PC-9 (cell line): ENCODE measurements at regions of chr1 and their contacts with region 1.

Region 1: DNA sequence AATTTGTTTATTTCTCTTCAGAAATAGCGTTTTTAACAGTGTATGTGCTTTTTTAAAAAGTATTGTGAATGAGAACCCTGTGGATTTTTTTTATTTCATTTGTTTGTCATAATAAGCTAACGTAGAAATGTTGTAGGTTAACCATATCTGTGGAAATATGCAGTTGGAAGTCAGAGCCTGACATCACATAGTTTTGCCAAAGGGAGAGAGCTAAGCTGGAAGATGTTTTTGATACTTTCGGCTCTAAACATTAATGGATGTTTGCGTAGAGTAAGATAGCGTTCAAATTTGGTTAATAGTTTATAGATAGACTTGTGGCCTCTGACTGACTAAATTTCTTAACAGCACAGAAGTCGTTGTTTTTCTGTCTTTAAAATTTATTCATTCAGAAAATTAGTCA is 47.4 kb upstream of the ANGPTL1 start:
- DNase-seq: no peak
- H3K4me3 ChIP-seq: no peak overlapping the region
- H3K27ac ChIP-seq: no peak overlapping the region
- H3K4me1 ChIP-seq: no peaks in the 10 kb centered on the region
- H3K27me3 ChIP-seq: no peaks in the 10 kb centered on the region
- CTCF ChIP-seq: no peak

Region 2: GRCh38 chr1:178871551-178872320 is 46.6 kb before region 1 on chr1:
- CTCF ChIA-PET with region 1: no interaction called
- POLR2A ChIA-PET with region 1: no interaction called
- intact Hi-C with region 1: no loop called
- DNase-seq: peak in 1 of 2 experiments; percentile 53
- H3K4me3 ChIP-seq: no peak overlapping the region
- H3K27ac ChIP-seq: peak overlapping the region; percentile 13; the same call in 1 of the 2 replicates
- H3K4me1 ChIP-seq: peaks cover 17% of the 10 kb centered on the region
- H3K27me3 ChIP-seq: no peaks in the 10 kb centered on the region
- CTCF ChIP-seq: no peak

Region 3: GRCh38 chr1:179034720-179035119 is 116.4 kb after region 1 on chr1:
- CTCF ChIA-PET with region 1: no interaction called
- POLR2A ChIA-PET with region 1: no interaction called
- intact Hi-C with region 1: no loop called
- DNase-seq: peak in 1 of 2 experiments; percentile 64
- H3K4me3 ChIP-seq: no peak overlapping the region
- H3K27ac ChIP-seq: peak overlapping the region; percentile 42
- H3K4me1 ChIP-seq: peaks cover 95% of the 10 kb centered on the region
- H3K27me3 ChIP-seq: no peaks in the 10 kb centered on the region
- CTCF ChIP-seq: no peak

Region 4: GRCh38 chr1:179175011-179175841 is 256.9 kb after region 1 on chr1:
- CTCF ChIA-PET with region 1: no interaction called
- POLR2A ChIA-PET with region 1: no interaction called
- intact Hi-C with region 1: no loop called
- DNase-seq: peak in 1 of 2 experiments; percentile 64
- H3K4me3 ChIP-seq: no peak overlapping the region
- H3K27ac ChIP-seq: peak overlapping the region; percentile 65
- H3K4me1 ChIP-seq: peaks cover 18% of the 10 kb centered on the region; the same call in 1 of the 2 replicates
- H3K27me3 ChIP-seq: no peaks in the 10 kb centered on the region
- CTCF ChIP-seq: no peak

Region 5: DNA sequence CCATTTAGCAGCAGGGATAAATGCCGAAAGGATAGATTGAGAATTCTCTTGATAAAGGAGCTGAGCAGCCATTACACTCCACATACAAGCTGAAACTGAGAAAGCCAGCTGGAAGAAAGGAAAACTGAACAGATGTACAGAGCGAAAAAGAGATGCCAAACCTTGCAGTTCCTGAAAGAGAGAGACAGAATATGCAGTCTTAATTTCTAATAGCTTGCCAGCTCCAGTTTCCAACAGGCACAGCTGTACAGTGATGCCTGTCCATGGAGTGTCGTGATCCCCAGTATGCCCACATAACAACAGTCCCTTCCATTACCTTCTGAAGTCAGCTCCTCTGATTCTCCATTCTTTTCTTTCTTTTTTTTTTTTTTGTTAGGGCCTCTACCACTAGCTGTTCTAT is 288.5 kb after region 1 on chr1:
- CTCF ChIA-PET with region 1: no interaction called
- POLR2A ChIA-PET with region 1: interaction called, 11 read pairs
- intact Hi-C with region 1: no loop called
- DNase-seq: no peak
- H3K4me3 ChIP-seq: no peak overlapping the region
- H3K27ac ChIP-seq: no peak overlapping the region
- H3K4me1 ChIP-seq: peaks cover 14% of the 10 kb centered on the region
- H3K27me3 ChIP-seq: no peaks in the 10 kb centered on the region
- CTCF ChIP-seq: no peak